H1 (cell line): ENCODE measurements at regions of chr3 and their contacts with region 1.

Region 1: DNA sequence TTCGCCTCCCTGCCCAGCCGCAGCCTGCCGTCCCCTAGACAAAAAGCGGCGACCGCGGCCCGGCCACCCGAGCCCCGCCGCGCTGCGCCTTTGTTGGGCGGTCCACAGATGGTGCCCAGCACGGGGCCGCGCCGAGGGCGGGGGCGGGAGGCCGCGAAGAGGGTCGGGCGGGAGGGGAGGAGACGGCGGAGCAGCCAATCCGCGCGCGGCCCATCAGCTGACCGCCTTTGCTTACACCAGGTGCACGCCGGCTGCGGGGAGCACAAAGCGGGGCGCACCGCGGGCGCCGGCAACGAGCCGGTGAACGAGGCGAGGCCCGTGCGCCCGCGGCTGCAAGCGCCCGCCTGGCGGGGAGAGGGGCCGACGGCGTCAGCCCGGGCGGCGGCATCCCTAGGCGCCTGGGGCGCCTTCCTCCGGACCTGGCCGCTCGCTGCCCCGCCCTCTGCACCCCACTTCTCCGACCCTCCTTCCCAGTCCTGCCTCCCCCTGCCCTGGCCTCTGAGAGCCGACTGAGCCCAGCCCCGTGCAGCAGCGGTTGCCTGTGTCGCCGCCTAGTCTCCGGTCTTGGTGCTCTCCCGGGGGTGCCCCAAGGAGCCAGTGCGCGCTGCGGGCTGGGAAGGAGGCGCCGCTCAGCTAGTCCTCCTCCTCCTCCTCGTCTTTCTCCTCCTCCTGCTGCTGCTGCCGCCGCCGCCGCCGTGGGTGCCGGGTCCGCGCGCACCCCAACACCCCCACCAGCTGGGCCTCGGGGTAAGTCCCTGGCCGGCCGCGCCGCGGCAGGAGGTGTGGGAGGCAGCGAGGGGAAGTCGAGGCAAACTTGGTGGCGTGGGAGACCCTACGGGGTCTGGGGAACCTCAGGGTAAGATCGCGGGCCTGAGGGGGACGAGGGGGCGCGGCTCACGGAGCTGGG is at the start of gene LRRN1:
- DNase-seq: peak; percentile 69 to 88
- H3K4me3 ChIP-seq: peak within 1 kb of the TSS; percentile 84 to 94 (median 88)
- H3K27ac ChIP-seq: peak within 1 kb of the TSS; percentile 93
- H3K4me1 ChIP-seq: peaks cover 5 to 18% (median 9%) of the 10 kb centered on the region in 4 experiments; a peak in 6 of 7 replicates
- H3K27me3 ChIP-seq: peaks cover 0 to 7% (median 2%) of the 10 kb centered on the region in 4 experiments; a peak in 5 of 7 replicates
- CTCF ChIP-seq: no peak
- EP300 ChIP-seq: peak in 1 of 2 experiments; percentile 62; a peak in 1 of 3 replicates
- POLR2A ChIP-seq: peak; percentile 89 to 98
- RAD21 ChIP-seq: 0 out of 4 replicates have a peak, but pooled peaks of 1 of the 2 experiments have one; percentile 0
- total RNA-seq, gene LRRN1: 199 TPM in 2 replicates

Region 2: GRCh38 chr3:3705090-3705775 is 94.2 kb before region 1 on chr3:
- CTCF ChIA-PET with region 1: interaction called, 3 read pairs
- POLR2A ChIA-PET with region 1: interaction called, 49 read pairs
- DNase-seq: peak in 1 of 2 experiments; percentile 47
- H3K4me3 ChIP-seq: no peak overlapping the region
- H3K27ac ChIP-seq: no peak overlapping the region
- H3K4me1 ChIP-seq: peaks cover 4 to 19% (median 8%) of the 10 kb centered on the region in 4 experiments; a peak in 4 of 7 replicates
- H3K27me3 ChIP-seq: no peaks in the 10 kb centered on the region
- CTCF ChIP-seq: no peak
- EP300 ChIP-seq: no peak
- POLR2A ChIP-seq: no peak
- RAD21 ChIP-seq: no peak

Region 3: GRCh38 chr3:3783210-3783609 is 16.2 kb before region 1 on chr3:
- CTCF ChIA-PET with region 1: no interaction called
- POLR2A ChIA-PET with region 1: interaction called, 19 read pairs
- DNase-seq: no peak
- H3K4me3 ChIP-seq: no peak overlapping the region
- H3K27ac ChIP-seq: no peak overlapping the region
- H3K4me1 ChIP-seq: no peaks in the 10 kb centered on the region
- H3K27me3 ChIP-seq: no peaks in the 10 kb centered on the region
- CTCF ChIP-seq: no peak
- EP300 ChIP-seq: no peak
- POLR2A ChIP-seq: no peak
- RAD21 ChIP-seq: no peak

Region 4: GRCh38 chr3:3836845-3837244 is 37.4 kb after region 1 on chr3:
- CTCF ChIA-PET with region 1: no interaction called
- POLR2A ChIA-PET with region 1: interaction called, 15 read pairs
- DNase-seq: no peak
- H3K4me3 ChIP-seq: no peak overlapping the region
- H3K27ac ChIP-seq: no peak overlapping the region
- H3K4me1 ChIP-seq: no peaks in the 10 kb centered on the region
- H3K27me3 ChIP-seq: no peaks in the 10 kb centered on the region
- CTCF ChIP-seq: no peak
- EP300 ChIP-seq: no peak
- POLR2A ChIP-seq: no peak
- RAD21 ChIP-seq: no peak

Region 5: GRCh38 chr3:3853544-3853943 is 54.1 kb after region 1 on chr3:
- CTCF ChIA-PET with region 1: no interaction called
- POLR2A ChIA-PET with region 1: interaction called, 15 read pairs
- DNase-seq: no peak
- H3K4me3 ChIP-seq: no peak overlapping the region
- H3K27ac ChIP-seq: no peak overlapping the region
- H3K4me1 ChIP-seq: peaks cover 0 to 12% (median 8%) of the 10 kb centered on the region in 4 experiments; a peak in 4 of 7 replicates
- H3K27me3 ChIP-seq: no peaks in the 10 kb centered on the region
- CTCF ChIP-seq: no peak
- EP300 ChIP-seq: no peak
- POLR2A ChIP-seq: no peak; a peak in 1 of 3 replicates
- RAD21 ChIP-seq: no peak

Region 6: GRCh38 chr3:3927965-3928364 is 128.5 kb after region 1 on chr3:
- CTCF ChIA-PET with region 1: no interaction called
- POLR2A ChIA-PET with region 1: no interaction called
- DNase-seq: no peak
- H3K4me3 ChIP-seq: no peak overlapping the region
- H3K27ac ChIP-seq: no peak overlapping the region
- H3K4me1 ChIP-seq: peaks cover 0 to 3% (median 0%) of the 10 kb centered on the region in 4 experiments; a peak in 1 of 7 replicates
- H3K27me3 ChIP-seq: no peaks in the 10 kb centered on the region
- CTCF ChIP-seq: no peak
- EP300 ChIP-seq: no peak
- POLR2A ChIP-seq: no peak
- RAD21 ChIP-seq: no peak